ENCODE measurements at regions of chr14 and their contacts with region 1.

Region 1: GRCh38 chr14:56331592-56332216 is 213.5 kb downstream of the PELI2 start:
- DNase-seq: no peak
- ATAC-seq: no peak
- H3K4me3 Mint-ChIP-seq: no peak overlapping the region
- H3K27ac Mint-ChIP-seq: no peak overlapping the region
- H3K4me1 Mint-ChIP-seq: peaks cover 8% of the 10 kb centered on the region
- H3K27me3 Mint-ChIP-seq: no peaks in the 10 kb centered on the region

Region 2: GRCh38 chr14:55233591-55233990 is 1098.1 kb before region 1 on chr14:
- CTCF ChIA-PET with region 1: no interaction called
- POLR2A ChIA-PET with region 1: interaction called, 10 read pairs
- intact Hi-C with region 1: no loop called
- DNase-seq: no peak
- ATAC-seq: no peak
- H3K4me3 Mint-ChIP-seq: no peak overlapping the region
- H3K27ac Mint-ChIP-seq: no peak overlapping the region
- H3K4me1 Mint-ChIP-seq: no peaks in the 10 kb centered on the region
- H3K27me3 Mint-ChIP-seq: peaks cover 15% of the 10 kb centered on the region

Measured in activated CD4-positive, alpha-beta T cell treated with anti-CD3 and anti-CD28 coated beads for 36 hours (primary cell).